Heart left ventricle (tissue), 16 donors: ENCODE measurements at regions of chr2 and their contacts with region 1.

Region 1: GRCh38 chr2:30436859-30437435 is 10.1 kb upstream of the LCLAT1 start:
- DNase-seq: no peak
- ATAC-seq: peak; percentile 26 to 70 (median 42)
- H3K4me3 ChIP-seq: no peak overlapping the region
- H3K27ac ChIP-seq: peak overlapping the region; percentile 36 to 88 (median 70)
- H3K4me1 ChIP-seq: peaks cover 0 to 41% (median 27%) of the 10 kb centered on the region in 12 donors
- H3K27me3 ChIP-seq: no peaks in the 10 kb centered on the region
- CTCF ChIP-seq: no peak
- POLR2A ChIP-seq: no peak

Region 2: DNA sequence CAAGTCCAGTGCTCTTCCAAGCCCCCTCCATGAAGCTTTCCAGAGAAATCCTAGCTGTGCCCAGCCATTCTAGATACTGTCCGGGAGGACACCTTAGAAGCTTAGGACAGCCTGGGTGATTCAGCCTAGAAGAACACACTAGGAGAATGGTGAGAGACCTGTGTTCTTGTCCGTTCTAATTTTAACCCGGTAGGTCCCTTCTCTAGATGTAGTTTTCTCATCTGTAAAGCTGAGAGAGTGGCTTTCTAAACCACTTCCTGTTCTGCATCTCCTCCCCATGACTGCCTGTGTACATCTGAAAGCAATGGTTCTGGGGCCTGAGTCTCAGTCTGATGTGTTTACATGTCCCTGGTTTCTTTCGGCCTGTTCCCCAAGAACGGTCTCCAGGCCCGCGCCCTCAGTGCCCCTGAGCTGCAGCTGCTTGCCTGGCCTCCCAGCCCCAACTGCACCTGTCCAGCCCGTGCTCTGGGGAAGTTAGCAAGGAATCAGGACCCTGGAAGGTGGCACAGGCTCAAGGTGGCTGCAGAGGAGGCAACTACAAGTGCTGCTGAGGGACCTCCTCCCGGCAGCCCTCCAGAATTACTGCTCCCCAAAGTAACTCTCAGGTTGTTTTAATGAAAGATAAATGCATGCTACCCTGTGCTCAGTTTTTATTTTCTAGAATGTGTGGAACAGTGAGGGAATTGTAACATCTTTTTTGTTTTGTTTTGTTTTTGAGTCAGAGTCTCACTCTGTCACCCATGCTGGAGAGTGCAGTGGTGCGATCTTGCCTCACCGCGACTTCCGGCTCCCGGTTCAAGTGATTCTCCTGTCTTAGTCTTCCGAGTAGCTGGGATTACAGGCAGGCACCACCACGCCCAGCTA is 99.7 kb before region 1 on chr2:
- intact Hi-C with region 1: loop called in 1 of 10 experiments (anchors 5 kb)
- DNase-seq: no peak
- ATAC-seq: no peak
- H3K4me3 ChIP-seq: no peak overlapping the region
- H3K27ac ChIP-seq: peak overlapping the region in 4 of 12 donors; percentile 26 to 77 (median 60)
- H3K4me1 ChIP-seq: peaks cover 0 to 46% (median 25%) of the 10 kb centered on the region in 12 donors
- H3K27me3 ChIP-seq: no peaks in the 10 kb centered on the region
- CTCF ChIP-seq: no peak
- POLR2A ChIP-seq: no peak